Left ventricle myocardium superior (tissue), 1 donor: ENCODE measurements at regions of chr12 and their contacts with region 1.

Region 1: DNA sequence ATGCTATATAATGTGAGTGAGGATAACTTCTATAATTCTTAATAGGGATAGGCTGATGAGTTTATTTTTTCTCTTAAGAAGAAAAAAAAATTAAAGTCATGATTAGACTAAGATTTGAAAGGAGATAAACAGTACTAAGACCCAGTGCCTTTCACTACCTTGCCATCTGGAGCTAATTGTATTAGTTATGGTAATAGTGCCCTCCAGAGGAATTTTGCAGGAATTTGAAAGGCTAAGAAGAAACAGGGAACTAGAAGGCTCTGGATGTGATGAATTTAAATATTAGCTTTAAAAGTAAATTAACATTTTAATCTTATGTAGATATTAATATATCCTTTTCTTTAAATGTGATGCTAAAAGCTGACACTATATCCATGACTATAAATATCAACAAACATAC is 36.6 kb upstream of the PIK3C2G start:
- DNase-seq: no peak
- ATAC-seq: no peak

Region 2: GRCh38 chr12:18139989-18140596 is 84.7 kb before region 1 on chr12:
- intact Hi-C with region 1: loop called (anchors 5 kb)
- DNase-seq: no peak
- ATAC-seq: no peak

Region 3: GRCh38 chr12:18454330-18454729 is 229.6 kb after region 1 on chr12:
- intact Hi-C with region 1: no loop called
- DNase-seq: no peak
- ATAC-seq: no peak